Breast epithelium (tissue), 4 donors: ENCODE measurements at regions of chr12 and their contacts with region 1.

Region 1: DNA sequence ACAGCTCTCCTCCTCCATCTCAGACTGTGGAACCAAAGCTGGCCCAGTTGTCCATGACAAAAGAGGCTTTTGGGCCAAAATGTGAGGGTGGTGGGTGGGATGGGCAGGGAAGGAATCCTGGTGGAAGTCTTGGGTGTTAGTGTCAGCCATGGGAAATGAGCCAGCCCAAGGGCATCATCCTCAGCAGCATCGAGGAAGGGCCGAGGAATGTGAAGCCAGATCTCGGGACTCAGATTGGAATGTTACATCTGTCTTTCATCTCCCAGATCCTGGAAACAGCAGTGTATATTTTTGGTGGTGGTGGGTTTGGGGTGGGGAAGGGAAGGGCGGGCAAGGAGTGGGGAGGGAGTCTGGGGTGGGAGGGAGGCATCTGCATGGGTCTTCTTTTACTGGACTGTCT is 11.8 kb upstream of the TAMALIN start:
- DNase-seq: no peak
- H3K4me3 ChIP-seq: no peak overlapping the region
- H3K27ac ChIP-seq: no peak overlapping the region
- H3K4me1 ChIP-seq: no peaks in the 10 kb centered on the region
- H3K27me3 ChIP-seq: no peaks in the 10 kb centered on the region
- CTCF ChIP-seq: no peak
- POLR2A ChIP-seq: no peak

Region 2: GRCh38 chr12:51976376-51977160 is 18.4 kb before region 1 on chr12:
- intact Hi-C with region 1: loop called (anchors 1 kb)
- DNase-seq: no peak
- H3K4me3 ChIP-seq: no peak overlapping the region
- H3K27ac ChIP-seq: no peak overlapping the region
- H3K4me1 ChIP-seq: peaks cover 0 to 16% of the 10 kb centered on the region in 2 donors
- H3K27me3 ChIP-seq: no peaks in the 10 kb centered on the region
- CTCF ChIP-seq: no peak
- POLR2A ChIP-seq: no peak